ENCODE measurements at regions of chr3 and their contacts with region 1.

Region 1: GRCh38 chr3:148955544-148956346 is 35.6 kb upstream of the GYG1 start:
- DNase-seq: peak; percentile 66
- H3K4me3 Mint-ChIP-seq: no peak overlapping the region
- H3K27ac Mint-ChIP-seq: no peak overlapping the region
- H3K4me1 Mint-ChIP-seq: no peaks in the 10 kb centered on the region
- H3K27me3 Mint-ChIP-seq: peaks cover 13% of the 10 kb centered on the region
- CTCF ChIP-seq: peak; percentile 54

Region 2: DNA sequence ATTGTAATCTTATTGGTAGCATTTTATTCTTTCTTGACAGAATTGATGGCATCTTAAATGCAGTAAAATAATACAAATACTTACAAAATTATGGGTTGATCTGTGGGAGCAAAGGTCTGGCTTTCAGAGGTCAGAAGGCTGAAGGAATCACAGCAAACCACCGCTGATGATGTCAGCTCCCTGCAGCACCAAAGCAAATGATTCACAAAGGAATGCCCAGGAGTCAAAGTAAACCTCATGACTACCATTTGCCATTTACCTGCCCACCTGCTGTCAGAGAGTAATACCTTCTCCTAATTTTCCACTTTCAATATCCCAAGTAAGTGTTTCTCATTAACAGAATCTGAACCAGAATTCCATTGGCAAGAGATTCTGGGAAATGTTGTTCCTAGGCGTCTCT is 44.6 kb before region 1 on chr3:
- CTCF ChIA-PET with region 1: no interaction called
- POLR2A ChIA-PET with region 1: no interaction called
- intact Hi-C with region 1: no loop called
- DNase-seq: no peak
- H3K4me3 Mint-ChIP-seq: no peak overlapping the region
- H3K27ac Mint-ChIP-seq: no peak overlapping the region
- H3K4me1 Mint-ChIP-seq: no peaks in the 10 kb centered on the region
- H3K27me3 Mint-ChIP-seq: peaks cover 94% of the 10 kb centered on the region
- CTCF ChIP-seq: no peak

Region 3: GRCh38 chr3:148971401-148972163 is 15.8 kb after region 1 on chr3:
- CTCF ChIA-PET with region 1: interaction called, 64 read pairs
- POLR2A ChIA-PET with region 1: interaction called, 3 read pairs
- intact Hi-C with region 1: no loop called
- DNase-seq: no peak
- H3K4me3 Mint-ChIP-seq: no peak overlapping the region
- H3K27ac Mint-ChIP-seq: no peak overlapping the region
- H3K4me1 Mint-ChIP-seq: no peaks in the 10 kb centered on the region
- H3K27me3 Mint-ChIP-seq: no peaks in the 10 kb centered on the region
- CTCF ChIP-seq: no peak

Region 4: DNA sequence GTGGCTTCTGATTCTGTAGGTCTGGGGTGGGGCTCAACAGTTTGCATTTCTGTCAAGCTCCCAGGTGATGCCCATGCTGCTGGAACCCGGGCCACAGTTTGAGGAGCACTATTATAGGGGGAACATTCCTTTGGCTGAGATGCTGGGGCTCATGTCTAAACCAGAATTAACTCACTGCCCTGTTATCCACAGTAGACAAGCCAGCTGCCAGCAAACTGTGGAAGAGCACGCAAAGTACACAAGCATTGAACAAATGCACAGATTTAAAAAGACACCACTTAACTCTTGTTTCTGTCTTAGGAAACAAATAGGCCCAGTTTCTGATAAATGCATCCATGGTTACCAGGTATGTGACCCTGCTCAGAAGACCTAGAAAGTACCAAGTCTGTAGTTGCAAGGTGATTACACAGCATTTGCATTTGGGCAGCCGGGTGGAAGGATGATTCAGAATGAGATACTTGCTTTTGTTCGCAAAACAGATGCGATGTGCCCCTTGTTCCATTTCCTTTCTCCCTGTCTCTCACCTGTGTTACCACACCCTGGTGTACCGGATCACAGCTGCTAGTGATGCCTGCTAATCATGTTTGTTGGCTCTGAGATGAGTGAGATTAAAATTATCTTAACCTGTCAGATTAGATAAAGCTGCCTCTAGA is 48.0 kb after region 1 on chr3:
- CTCF ChIA-PET with region 1: interaction called, 17 read pairs
- POLR2A ChIA-PET with region 1: no interaction called
- intact Hi-C with region 1: no loop called
- DNase-seq: no peak
- H3K4me3 Mint-ChIP-seq: no peak overlapping the region
- H3K27ac Mint-ChIP-seq: no peak overlapping the region
- H3K4me1 Mint-ChIP-seq: peaks cover 6% of the 10 kb centered on the region
- H3K27me3 Mint-ChIP-seq: no peaks in the 10 kb centered on the region
- CTCF ChIP-seq: no peak

Region 5: GRCh38 chr3:149086232-149086988 is 130.7 kb after region 1 on chr3 and contains the start of gene HLTF:
- CTCF ChIA-PET with region 1: no interaction called
- POLR2A ChIA-PET with region 1: no interaction called
- intact Hi-C with region 1: no loop called
- DNase-seq: peak; percentile 98
- H3K4me3 Mint-ChIP-seq: peak within 1 kb of the TSS; percentile 91
- H3K27ac Mint-ChIP-seq: no peak within 1 kb of the TSS
- H3K4me1 Mint-ChIP-seq: no peaks in the 10 kb centered on the region
- H3K27me3 Mint-ChIP-seq: no peaks in the 10 kb centered on the region
- CTCF ChIP-seq: no peak
- total RNA-seq, gene HLTF: 21.9 TPM in 2 replicates

Region 6: DNA sequence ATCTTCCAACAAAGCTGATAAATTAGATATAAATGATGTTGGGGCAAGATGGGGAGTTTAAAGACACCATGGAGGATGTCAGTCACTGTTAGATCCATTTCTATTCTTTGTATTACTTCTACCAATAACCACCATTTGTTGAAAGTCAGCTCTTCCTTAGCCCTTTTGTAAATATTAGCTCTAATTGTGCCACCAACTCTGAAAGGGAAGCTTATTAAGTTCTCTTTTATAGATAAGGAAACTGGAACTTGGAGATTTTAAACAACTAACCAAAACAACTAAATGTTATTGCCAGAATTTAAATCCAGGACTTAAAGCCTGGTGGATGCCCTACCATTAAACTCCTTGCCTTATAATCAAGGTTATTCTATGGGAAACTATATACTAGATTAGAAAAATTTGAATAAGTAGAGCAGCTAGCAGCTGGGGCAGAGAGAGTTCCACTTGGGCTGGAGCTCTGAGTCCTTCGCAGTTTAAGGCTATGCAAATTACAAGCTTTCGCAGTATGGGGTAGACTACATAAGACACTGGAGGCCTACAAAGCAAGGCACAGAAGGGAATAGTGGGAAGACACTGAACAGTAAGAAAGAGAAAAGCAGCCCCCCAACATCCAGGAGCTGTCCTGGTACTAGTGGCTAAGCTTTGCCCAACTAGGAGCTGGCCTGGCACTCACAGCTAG is 325.1 kb after region 1 on chr3:
- CTCF ChIA-PET with region 1: interaction called, 51 read pairs
- POLR2A ChIA-PET with region 1: no interaction called
- intact Hi-C with region 1: no loop called
- DNase-seq: no peak
- H3K4me3 Mint-ChIP-seq: no peak overlapping the region
- H3K27ac Mint-ChIP-seq: no peak overlapping the region
- H3K4me1 Mint-ChIP-seq: peaks cover 14% of the 10 kb centered on the region
- H3K27me3 Mint-ChIP-seq: no peaks in the 10 kb centered on the region
- CTCF ChIP-seq: no peak

Region 7: DNA sequence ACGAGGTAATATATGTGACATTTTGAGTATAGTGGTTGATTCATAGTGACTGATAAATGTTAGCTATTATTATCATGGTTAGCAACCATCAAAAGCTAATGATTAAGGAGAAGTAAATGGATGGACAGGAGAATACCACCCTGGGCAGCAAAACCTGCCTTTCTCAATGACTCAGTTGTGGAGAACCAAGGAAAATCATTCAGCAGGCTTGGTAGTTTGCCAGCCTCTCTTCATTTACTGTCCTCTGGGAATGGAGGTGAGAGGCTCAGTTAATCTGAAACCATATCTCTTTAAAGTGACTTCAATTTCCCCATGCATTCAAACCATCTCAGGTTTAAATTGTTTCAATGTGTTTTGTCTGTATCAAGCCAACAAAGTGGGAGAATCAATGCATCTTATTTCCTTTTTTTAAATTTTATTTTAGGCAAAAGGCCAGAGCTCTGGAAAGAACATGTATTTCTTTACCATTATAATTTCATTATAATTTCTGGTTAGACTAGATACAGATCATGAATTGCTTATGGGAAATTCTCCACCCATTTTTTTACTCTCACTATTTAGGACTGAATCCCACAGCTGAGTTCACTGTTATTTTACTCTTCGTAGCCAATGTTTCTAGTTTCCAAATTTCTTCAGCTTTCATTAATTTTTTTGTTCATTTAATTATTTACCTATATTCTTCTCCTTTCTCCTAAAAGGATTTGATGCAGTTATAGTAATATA is 375.0 kb after region 1 on chr3:
- CTCF ChIA-PET with region 1: interaction called, 9 read pairs
- POLR2A ChIA-PET with region 1: no interaction called
- intact Hi-C with region 1: loop called (anchors 1 kb)
- DNase-seq: peak; percentile 29
- H3K4me3 Mint-ChIP-seq: no peak overlapping the region
- H3K27ac Mint-ChIP-seq: no peak overlapping the region
- H3K4me1 Mint-ChIP-seq: no peaks in the 10 kb centered on the region
- H3K27me3 Mint-ChIP-seq: no peaks in the 10 kb centered on the region
- CTCF ChIP-seq: no peak